ENCODE measurements at regions of chr12 and their contacts with region 1.

Region 1: DNA sequence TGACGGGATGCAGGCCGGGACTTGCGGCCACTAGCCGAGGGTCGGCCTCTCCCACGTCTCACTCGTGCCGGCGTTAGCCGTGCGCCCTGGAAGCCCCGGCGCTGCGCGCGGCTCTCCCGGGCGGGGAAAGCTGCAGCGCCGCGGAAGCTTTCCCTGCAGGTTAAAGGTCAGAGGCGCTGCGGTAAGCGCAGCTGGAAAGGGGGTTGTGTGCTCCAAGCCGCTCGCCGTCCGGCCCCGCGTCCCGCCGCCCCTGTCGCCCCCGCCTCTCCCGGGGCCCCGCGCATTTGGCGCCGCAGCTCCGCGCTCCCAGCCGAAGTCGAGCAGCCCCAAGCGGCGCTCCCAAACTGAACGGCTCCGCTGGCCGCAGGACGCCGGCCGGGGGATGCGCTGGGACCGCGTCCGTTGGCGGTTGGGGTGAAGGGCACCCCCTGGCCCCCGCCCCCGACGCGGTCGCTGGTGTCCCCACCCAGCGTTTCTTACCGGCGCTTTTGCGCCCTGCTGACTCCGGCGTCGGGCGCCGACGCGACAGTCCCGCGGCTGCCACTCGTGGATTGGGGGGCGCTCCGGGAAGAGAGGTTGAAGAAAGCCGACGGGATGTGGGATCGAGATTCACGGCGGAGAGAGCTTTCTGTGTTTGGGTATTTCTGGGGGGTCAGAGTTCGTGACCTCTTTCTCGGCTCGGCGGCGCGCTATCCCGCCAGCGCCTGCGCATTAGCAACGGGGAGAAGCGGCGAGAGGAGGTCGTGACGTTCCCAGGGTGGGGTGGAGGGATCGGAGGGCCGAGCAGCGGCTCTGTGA is at the start of gene NR2C1:
- DNase-seq: peak; percentile 80 to 97
- ATAC-seq: peak; percentile 97
- H3K4me3 ChIP-seq: peak within 1 kb of the TSS; percentile 96
- H3K4me3 Mint-ChIP-seq: peak within 1 kb of the TSS; percentile 94
- H3K27ac ChIP-seq: peak within 1 kb of the TSS; percentile 81
- H3K27ac Mint-ChIP-seq: peak within 1 kb of the TSS; percentile 81 to 92
- H3K4me1 ChIP-seq: peaks cover 14% of the 10 kb centered on the region
- H3K4me1 Mint-ChIP-seq: peaks cover 7 to 13% of the 10 kb centered on the region in 2 donors
- H3K27me3 ChIP-seq: no peaks in the 10 kb centered on the region
- H3K27me3 Mint-ChIP-seq: no peaks in the 10 kb centered on the region
- CTCF ChIP-seq: no peak
- total RNA-seq, gene NR2C1: 41.4 to 58.5 (median 46.9) TPM

Region 2: DNA sequence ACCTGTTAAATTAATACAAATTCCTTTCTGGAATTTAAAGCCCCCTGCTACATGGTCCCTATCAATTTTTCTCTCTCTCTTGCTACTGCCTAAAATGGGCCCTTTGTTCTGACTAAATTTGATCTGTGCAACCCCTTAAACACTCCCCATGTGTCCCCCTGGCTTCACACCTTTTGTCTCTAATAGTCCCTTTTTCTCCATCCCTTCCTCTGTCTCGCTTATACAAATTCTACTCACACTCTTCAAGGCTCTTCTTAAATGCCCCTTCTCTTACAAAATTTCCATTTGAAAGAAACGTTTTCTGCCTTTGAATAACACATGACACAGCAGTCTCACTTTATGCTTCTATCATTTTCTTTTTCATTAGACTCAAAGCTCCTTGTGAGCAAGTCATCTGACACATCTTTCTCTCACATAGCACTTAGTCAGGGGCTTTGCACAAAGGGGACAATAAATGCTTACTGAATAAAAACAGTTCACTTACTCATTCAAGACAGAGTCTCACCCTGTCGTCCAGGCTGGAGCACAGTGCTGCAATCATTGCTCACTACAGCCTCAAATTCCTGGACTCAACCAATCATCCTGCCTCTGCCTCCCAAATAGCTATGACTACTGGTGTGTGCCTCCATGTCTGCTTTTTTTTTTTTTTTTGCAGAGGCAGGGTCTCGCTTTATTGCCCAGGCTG is 41.8 kb after region 1 on chr12:
- intact Hi-C with region 1: no loop called
- DNase-seq: no peak
- ATAC-seq: no peak
- H3K4me3 ChIP-seq: no peak overlapping the region
- H3K4me3 Mint-ChIP-seq: no peak overlapping the region
- H3K27ac ChIP-seq: no peak overlapping the region
- H3K27ac Mint-ChIP-seq: no peak overlapping the region
- H3K4me1 ChIP-seq: no peaks in the 10 kb centered on the region
- H3K4me1 Mint-ChIP-seq: no peaks in the 10 kb centered on the region
- H3K27me3 ChIP-seq: no peaks in the 10 kb centered on the region
- H3K27me3 Mint-ChIP-seq: no peaks in the 10 kb centered on the region
- CTCF ChIP-seq: no peak

Region 3: GRCh38 chr12:95147866-95148265 is 74.8 kb after region 1 on chr12:
- intact Hi-C with region 1: no loop called
- DNase-seq: no peak
- ATAC-seq: no peak
- H3K4me3 ChIP-seq: no peak overlapping the region
- H3K4me3 Mint-ChIP-seq: no peak overlapping the region
- H3K27ac ChIP-seq: no peak overlapping the region
- H3K27ac Mint-ChIP-seq: no peak overlapping the region
- H3K4me1 ChIP-seq: no peaks in the 10 kb centered on the region
- H3K4me1 Mint-ChIP-seq: no peaks in the 10 kb centered on the region
- H3K27me3 ChIP-seq: no peaks in the 10 kb centered on the region
- H3K27me3 Mint-ChIP-seq: no peaks in the 10 kb centered on the region
- CTCF ChIP-seq: no peak

Region 4: DNA sequence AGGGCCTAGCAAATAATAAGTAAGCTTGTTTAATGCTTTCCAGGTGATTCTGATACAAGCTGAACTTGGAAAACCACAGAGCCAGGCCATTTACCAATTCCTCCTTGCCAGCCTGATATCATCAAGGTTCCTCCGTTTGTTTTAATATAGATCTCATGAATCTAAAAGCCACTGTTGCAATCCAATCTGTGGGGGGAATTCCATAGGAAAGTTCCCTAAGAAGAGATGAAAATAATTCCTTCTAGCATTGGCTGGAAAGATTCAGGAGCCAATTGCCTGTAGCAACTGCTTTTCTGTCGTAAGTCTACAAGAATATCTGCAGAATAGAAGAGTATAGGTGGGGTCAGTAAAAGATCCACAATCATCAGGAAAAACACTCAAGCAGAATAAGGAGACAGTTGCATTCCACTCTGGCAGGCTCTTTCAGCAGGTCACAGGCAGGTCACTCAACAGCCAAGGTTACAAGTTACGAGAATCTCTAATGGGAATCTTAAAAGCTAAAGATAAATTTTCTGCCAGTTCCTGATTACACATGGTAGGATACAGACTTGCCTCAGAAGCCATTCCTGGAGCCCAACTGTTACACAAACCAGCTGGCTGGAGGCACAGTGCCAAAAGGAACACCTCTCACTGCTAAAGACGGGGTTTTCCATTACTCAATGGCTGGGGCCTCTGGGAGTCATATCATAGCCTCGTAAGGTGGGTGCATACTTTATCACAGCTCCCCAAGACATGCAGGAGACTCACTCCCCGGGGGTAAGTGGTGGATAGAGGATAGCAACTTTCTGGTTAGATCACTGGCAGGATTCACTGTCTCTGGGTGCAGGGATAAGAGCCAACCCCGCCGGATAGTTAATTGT is 100.5 kb after region 1 on chr12:
- intact Hi-C with region 1: no loop called
- DNase-seq: no peak
- ATAC-seq: no peak
- H3K4me3 ChIP-seq: no peak overlapping the region
- H3K4me3 Mint-ChIP-seq: no peak overlapping the region
- H3K27ac ChIP-seq: no peak overlapping the region
- H3K27ac Mint-ChIP-seq: no peak overlapping the region
- H3K4me1 ChIP-seq: no peaks in the 10 kb centered on the region
- H3K4me1 Mint-ChIP-seq: no peaks in the 10 kb centered on the region
- H3K27me3 ChIP-seq: no peaks in the 10 kb centered on the region
- H3K27me3 Mint-ChIP-seq: no peaks in the 10 kb centered on the region
- CTCF ChIP-seq: no peak

Region 5: DNA sequence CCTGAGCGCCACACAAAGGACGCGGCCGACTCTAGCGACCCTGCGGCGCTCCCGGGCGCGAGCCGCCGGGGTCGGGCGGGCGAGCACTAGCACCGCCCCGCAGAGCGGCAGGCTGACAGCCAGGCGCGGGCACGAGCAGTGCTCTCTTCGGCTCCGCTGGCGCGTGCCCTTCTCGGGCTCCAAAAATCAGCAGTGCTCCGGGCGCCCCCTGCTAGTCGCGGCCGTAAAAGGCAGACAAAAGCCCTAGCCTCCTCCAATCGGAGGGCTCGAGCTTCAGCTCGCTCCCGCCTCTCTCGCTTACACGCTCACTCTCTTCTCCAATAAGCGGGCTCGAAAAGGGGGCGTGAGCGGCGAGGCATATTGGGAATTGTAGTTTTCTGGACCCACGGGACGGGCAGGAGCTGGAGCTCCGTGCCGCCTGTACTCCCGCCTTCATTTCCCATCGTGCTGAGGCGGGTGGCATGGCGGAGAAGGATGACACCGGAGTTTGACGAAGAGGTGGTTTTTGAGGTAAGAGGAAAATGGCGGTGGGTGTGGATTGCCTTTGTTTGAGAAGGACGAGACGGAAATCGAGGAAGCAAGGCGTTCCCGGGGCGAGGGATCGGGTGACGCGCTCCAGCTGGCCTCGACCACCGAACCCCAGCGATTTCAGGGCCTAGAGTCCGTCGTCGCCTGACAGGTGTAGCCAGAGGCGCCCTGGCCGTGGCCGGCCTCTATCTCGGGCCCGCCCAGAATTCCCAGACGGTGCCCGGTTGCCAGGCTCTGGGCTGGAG is 144.5 kb after region 1 on chr12 and contains the starts of genes FGD6 and VEZT:
- intact Hi-C with region 1: loop called (anchors 5 kb)
- DNase-seq: peak; percentile 93 to 98
- ATAC-seq: peak; percentile 93 to 98 (median 94)
- H3K4me3 ChIP-seq: peak within 1 kb of the TSS; percentile 95
- H3K4me3 Mint-ChIP-seq: peak within 1 kb of the TSS; percentile 100
- H3K27ac ChIP-seq: peak within 1 kb of the TSS; percentile 85
- H3K27ac Mint-ChIP-seq: peak within 1 kb of the TSS; percentile 91 to 97
- H3K4me1 ChIP-seq: peaks cover 10% of the 10 kb centered on the region
- H3K4me1 Mint-ChIP-seq: peaks cover 27 to 31% of the 10 kb centered on the region in 2 donors
- H3K27me3 ChIP-seq: peaks cover 5% of the 10 kb centered on the region
- H3K27me3 Mint-ChIP-seq: peaks cover 6 to 9% of the 10 kb centered on the region in 2 donors
- CTCF ChIP-seq: peak; percentile 63
- total RNA-seq, gene FGD6: 1.5 to 1.9 (median 1.9) TPM
- total RNA-seq, gene VEZT: 32.7 to 37.0 (median 35.1) TPM

Measured in natural killer cell (primary cell).